Activated CD8-positive, alpha-beta T cell treated with anti-CD3 and anti-CD28 coated beads for 36 hours (primary cell): ENCODE measurements at regions of chr3 and their contacts with region 1.

Region 1: DNA sequence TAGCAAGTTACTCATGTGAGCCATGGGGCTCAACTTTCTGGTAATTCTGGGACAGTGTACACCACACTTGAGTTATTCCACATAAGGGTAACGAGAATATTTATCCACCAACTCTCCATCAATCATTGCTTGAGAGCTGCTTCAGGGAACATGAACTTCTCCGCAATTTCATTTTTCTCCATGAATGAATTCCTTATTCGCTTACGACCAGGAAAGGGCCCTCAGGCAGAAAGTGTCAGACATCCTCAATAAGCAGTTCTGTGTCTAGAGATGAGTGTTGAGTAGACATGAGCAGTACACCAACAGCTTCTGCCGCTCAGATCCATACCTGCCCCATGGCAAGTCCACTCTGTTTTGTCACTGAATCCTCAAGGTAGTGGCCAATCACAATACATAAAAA is 24.8 kb upstream of the IQCF2 start:
- DNase-seq: no peak
- ATAC-seq: no peak
- H3K4me3 Mint-ChIP-seq: no peak overlapping the region
- H3K27ac Mint-ChIP-seq: no peak overlapping the region
- H3K4me1 Mint-ChIP-seq: no peaks in the 10 kb centered on the region
- H3K27me3 Mint-ChIP-seq: peaks cover 14% of the 10 kb centered on the region
- CTCF ChIP-seq: no peak

Region 2: GRCh38 chr3:51559411-51559888 is 277.2 kb before region 1 on chr3:
- CTCF ChIA-PET with region 1: no interaction called
- POLR2A ChIA-PET with region 1: no interaction called
- intact Hi-C with region 1: no loop called
- DNase-seq: no peak
- ATAC-seq: no peak
- H3K4me3 Mint-ChIP-seq: no peak overlapping the region
- H3K27ac Mint-ChIP-seq: no peak overlapping the region
- H3K4me1 Mint-ChIP-seq: peaks cover 13% of the 10 kb centered on the region
- H3K27me3 Mint-ChIP-seq: no peaks in the 10 kb centered on the region
- CTCF ChIP-seq: no peak

Region 3: GRCh38 chr3:51786267-51786666 is 50.3 kb before region 1 on chr3:
- CTCF ChIA-PET with region 1: no interaction called
- POLR2A ChIA-PET with region 1: no interaction called
- intact Hi-C with region 1: no loop called
- DNase-seq: no peak
- ATAC-seq: no peak
- H3K4me3 Mint-ChIP-seq: no peak overlapping the region
- H3K27ac Mint-ChIP-seq: no peak overlapping the region
- H3K4me1 Mint-ChIP-seq: peaks cover 13% of the 10 kb centered on the region
- H3K27me3 Mint-ChIP-seq: peaks cover 9% of the 10 kb centered on the region
- CTCF ChIP-seq: no peak

Region 4: DNA sequence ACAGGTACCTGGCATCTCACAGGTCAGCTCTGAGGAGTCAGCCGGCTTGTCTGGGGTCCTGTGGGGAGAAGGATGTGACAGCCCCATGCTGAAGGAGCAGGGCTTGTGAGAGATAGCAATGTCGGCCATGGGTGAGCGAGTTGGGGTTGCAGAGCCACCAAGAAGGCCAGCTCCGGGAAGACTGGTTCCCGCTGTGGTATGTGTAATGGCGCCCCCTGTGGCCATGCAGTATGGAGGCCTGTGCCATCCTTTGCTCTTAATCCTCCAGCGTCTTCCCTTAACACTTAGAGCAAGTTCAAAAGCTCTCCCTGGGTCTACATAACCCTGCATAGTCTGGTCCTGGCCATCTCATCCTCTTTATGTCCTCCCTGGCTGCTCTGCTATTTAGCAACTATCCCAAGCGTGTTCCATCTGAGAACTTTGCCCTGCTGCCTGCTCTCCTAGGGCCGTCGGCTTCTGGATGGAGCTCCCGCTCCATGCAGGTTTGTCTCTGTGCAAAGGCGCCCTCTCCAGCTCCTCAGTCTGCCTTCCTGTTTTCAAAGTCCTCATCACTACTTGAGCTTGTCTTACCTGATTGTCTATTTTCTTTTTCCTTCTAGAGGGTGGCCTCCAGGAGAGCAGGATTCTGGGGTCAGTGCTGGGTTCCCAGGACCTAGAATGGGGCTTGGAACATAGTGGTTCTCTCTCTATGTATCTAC is 16.7 kb before region 1 on chr3:
- CTCF ChIA-PET with region 1: interaction called, 10 read pairs
- POLR2A ChIA-PET with region 1: no interaction called
- intact Hi-C with region 1: no loop called
- DNase-seq: peak; percentile 39
- ATAC-seq: peak; percentile 45
- H3K4me3 Mint-ChIP-seq: no peak overlapping the region
- H3K27ac Mint-ChIP-seq: no peak overlapping the region
- H3K4me1 Mint-ChIP-seq: peaks cover 7% of the 10 kb centered on the region
- H3K27me3 Mint-ChIP-seq: peaks cover 17% of the 10 kb centered on the region
- CTCF ChIP-seq: peak; percentile 50